ENCODE measurements at regions of chr19 and their contacts with region 1.

Region 1: DNA sequence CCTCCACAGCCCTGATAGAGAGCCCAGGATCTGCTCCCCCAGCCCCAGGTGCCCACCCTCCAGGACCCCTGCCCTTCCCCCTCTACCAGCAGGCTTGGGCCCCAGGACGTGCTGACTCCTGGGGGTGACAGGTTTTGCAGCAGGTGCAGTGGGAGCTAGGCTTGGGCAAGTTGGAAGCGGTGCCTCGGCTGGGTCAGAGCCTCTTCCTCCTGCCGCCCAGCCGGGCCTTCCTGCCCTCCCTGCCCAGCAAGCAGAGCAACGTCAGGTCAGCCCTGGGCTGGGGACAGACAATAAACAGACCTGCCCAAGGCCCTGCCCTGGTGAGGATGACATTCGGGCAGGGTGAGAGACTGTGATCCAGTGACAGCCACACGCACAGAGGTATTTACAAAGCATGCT is 9.2 kb upstream of the NCCRP1 start:
- DNase-seq: no peak
- H3K4me3 ChIP-seq: no peak overlapping the region
- H3K27ac ChIP-seq: peak overlapping the region in 3 of 4 donors; percentile 55 to 70 (median 58)
- H3K4me1 ChIP-seq: peaks cover 0 to 8% (median 0%) of the 10 kb centered on the region in 3 donors
- H3K27me3 ChIP-seq: peaks cover 0 to 21% (median 0%) of the 10 kb centered on the region in 4 donors
- CTCF ChIP-seq: no peak
- POLR2A ChIP-seq: no peak

Region 2: GRCh38 chr19:39124136-39124764 is 63.3 kb before region 1 on chr19:
- intact Hi-C with region 1: loop called (anchors 5 kb)
- DNase-seq: no peak
- H3K4me3 ChIP-seq: no peak overlapping the region
- H3K27ac ChIP-seq: no peak overlapping the region
- H3K4me1 ChIP-seq: peaks cover 22 to 60% (median 25%) of the 10 kb centered on the region in 3 donors
- H3K27me3 ChIP-seq: peaks cover 0 to 6% (median 0%) of the 10 kb centered on the region in 4 donors
- CTCF ChIP-seq: no peak
- POLR2A ChIP-seq: no peak

Region 3: DNA sequence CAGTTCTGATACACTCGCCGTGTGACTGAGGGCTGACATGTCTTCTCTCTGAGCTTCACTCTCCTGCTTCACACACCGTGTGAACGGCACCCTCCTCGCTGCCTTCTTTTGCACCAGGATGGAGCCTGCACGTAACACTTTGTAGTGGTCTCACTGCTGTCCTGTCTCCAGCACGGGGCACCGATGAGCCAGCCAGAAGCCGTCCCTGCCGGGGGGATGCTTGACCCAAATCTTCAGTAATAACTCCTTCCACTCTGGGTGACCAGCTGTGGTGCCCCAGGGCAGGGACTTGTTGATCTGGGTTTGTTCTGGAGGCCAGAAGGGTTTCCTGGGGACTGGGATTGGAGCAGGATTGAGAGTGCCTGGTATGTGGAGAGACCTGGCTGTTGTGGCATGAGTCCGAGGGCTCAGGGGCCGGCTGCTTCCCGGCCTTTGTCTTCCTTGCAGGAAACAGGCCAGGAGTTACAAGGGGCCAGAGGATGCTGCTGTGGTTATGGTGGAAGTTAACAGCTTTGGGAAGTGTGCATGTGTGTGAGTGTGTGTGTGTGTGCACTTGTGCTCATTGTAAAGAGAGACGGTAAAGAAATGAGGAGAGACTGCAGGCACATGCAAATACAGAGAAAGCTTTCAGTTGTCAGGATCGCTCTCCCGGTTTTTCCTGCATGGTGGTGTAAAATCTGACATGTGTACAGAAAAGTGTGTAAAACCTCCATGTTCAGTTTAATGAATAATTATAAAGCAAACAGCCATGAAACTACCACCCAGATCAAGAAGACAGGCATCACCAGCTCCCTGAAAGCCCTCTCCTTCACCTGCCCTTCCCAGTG is 43.1 kb before region 1 on chr19:
- intact Hi-C with region 1: no loop called
- DNase-seq: no peak
- H3K4me3 ChIP-seq: peak overlapping the region in 1 of 4 donors; percentile 14
- H3K27ac ChIP-seq: peak overlapping the region; percentile 18 to 85 (median 82)
- H3K4me1 ChIP-seq: peaks cover 22 to 55% (median 23%) of the 10 kb centered on the region in 3 donors
- H3K27me3 ChIP-seq: no peaks in the 10 kb centered on the region
- CTCF ChIP-seq: no peak
- POLR2A ChIP-seq: no peak

Measured in esophagus squamous epithelium (tissue), 5 donors.